Ovary (tissue), 10 donors: ENCODE measurements at regions of chr11 and their contacts with region 1.

Region 1: GRCh38 chr11:62726915-62727763 is at the start of gene HNRNPUL2:
- DNase-seq: peak; percentile 98 to 99 (median 98)
- H3K4me3 ChIP-seq: peak within 1 kb of the TSS; percentile 91
- H3K27ac ChIP-seq: peak within 1 kb of the TSS; percentile 50 to 89
- H3K4me1 ChIP-seq: peaks cover 3% of the 10 kb centered on the region
- H3K27me3 ChIP-seq: no peaks in the 10 kb centered on the region
- CTCF ChIP-seq: peak in 1 of 3 donors; percentile 7
- EP300 ChIP-seq: no peak
- POLR2A ChIP-seq: peak; percentile 82
- total RNA-seq, gene HNRNPUL2: 11.0 to 50.0 (median 41.2) TPM

Region 2: GRCh38 chr11:62652161-62653006 is 74.8 kb before region 1 on chr11:
- intact Hi-C with region 1: no loop called
- DNase-seq: no peak
- H3K4me3 ChIP-seq: peak overlapping the region; percentile 84
- H3K27ac ChIP-seq: peak overlapping the region; percentile 81 to 83
- H3K4me1 ChIP-seq: peaks cover 3% of the 10 kb centered on the region
- H3K27me3 ChIP-seq: no peaks in the 10 kb centered on the region
- CTCF ChIP-seq: no peak
- EP300 ChIP-seq: no peak
- POLR2A ChIP-seq: no peak

Region 3: GRCh38 chr11:62671575-62672389 is 55.4 kb before region 1 on chr11 and contains the starts of genes LBHD1 and UQCC3:
- intact Hi-C with region 1: loop called in 2 of 4 experiments (anchors 5 kb)
- DNase-seq: peak; percentile 75 to 85 (median 78)
- H3K4me3 ChIP-seq: peak within 1 kb of the TSS; percentile 83
- H3K27ac ChIP-seq: peak within 1 kb of the TSS; percentile 44 to 82
- H3K4me1 ChIP-seq: peaks cover 9% of the 10 kb centered on the region
- H3K27me3 ChIP-seq: no peaks in the 10 kb centered on the region
- CTCF ChIP-seq: no peak
- EP300 ChIP-seq: no peak
- POLR2A ChIP-seq: peak; percentile 60
- total RNA-seq, gene LBHD1: 2.4 to 6.0 (median 4.6) TPM
- total RNA-seq, gene UQCC3: 7.1 to 13.7 (median 8.9) TPM

Region 4: GRCh38 chr11:62678770-62679696 is 48.1 kb before region 1 on chr11 and contains the start of gene UBXN1:
- intact Hi-C with region 1: loop called in 2 of 4 experiments (anchors 5 kb)
- DNase-seq: peak; percentile 88 to 92 (median 90)
- H3K4me3 ChIP-seq: peak within 1 kb of the TSS; percentile 60
- H3K27ac ChIP-seq: peak within 1 kb of the TSS; percentile 73 to 82
- H3K4me1 ChIP-seq: peaks cover 3% of the 10 kb centered on the region
- H3K27me3 ChIP-seq: no peaks in the 10 kb centered on the region
- CTCF ChIP-seq: no peak
- EP300 ChIP-seq: peak; percentile 63
- POLR2A ChIP-seq: peak; percentile 57
- total RNA-seq, gene UBXN1: 106 to 239 (median 170) TPM

Region 5: GRCh38 chr11:62805076-62805892 is 78.1 kb after region 1 on chr11 and contains the start of gene NXF1:
- intact Hi-C with region 1: no loop called
- DNase-seq: peak; percentile 93 to 98 (median 97)
- H3K4me3 ChIP-seq: peak within 1 kb of the TSS; percentile 82
- H3K27ac ChIP-seq: peak within 1 kb of the TSS; percentile 40 to 80
- H3K4me1 ChIP-seq: peaks cover 6% of the 10 kb centered on the region
- H3K27me3 ChIP-seq: no peaks in the 10 kb centered on the region
- CTCF ChIP-seq: peak in 2 of 3 donors; percentile 53 to 56
- EP300 ChIP-seq: peak; percentile 43
- POLR2A ChIP-seq: peak; percentile 99
- total RNA-seq, gene NXF1: 48.8 to 96.8 (median 77.7) TPM

Region 6: GRCh38 chr11:62841361-62842184 is 114.4 kb after region 1 on chr11:
- intact Hi-C with region 1: loop called in 1 of 4 experiments (anchors 5 kb)
- DNase-seq: peak; percentile 83 to 89 (median 85)
- H3K4me3 ChIP-seq: peak overlapping the region; percentile 87
- H3K27ac ChIP-seq: peak overlapping the region; percentile 95 to 98
- H3K4me1 ChIP-seq: no peaks in the 10 kb centered on the region
- H3K27me3 ChIP-seq: no peaks in the 10 kb centered on the region
- CTCF ChIP-seq: peak in 1 of 3 donors; percentile 25
- EP300 ChIP-seq: peak; percentile 15
- POLR2A ChIP-seq: peak; percentile 93